HCT116 (cell line): ENCODE measurements at regions of chr1 and their contacts with region 1.

Region 1: DNA sequence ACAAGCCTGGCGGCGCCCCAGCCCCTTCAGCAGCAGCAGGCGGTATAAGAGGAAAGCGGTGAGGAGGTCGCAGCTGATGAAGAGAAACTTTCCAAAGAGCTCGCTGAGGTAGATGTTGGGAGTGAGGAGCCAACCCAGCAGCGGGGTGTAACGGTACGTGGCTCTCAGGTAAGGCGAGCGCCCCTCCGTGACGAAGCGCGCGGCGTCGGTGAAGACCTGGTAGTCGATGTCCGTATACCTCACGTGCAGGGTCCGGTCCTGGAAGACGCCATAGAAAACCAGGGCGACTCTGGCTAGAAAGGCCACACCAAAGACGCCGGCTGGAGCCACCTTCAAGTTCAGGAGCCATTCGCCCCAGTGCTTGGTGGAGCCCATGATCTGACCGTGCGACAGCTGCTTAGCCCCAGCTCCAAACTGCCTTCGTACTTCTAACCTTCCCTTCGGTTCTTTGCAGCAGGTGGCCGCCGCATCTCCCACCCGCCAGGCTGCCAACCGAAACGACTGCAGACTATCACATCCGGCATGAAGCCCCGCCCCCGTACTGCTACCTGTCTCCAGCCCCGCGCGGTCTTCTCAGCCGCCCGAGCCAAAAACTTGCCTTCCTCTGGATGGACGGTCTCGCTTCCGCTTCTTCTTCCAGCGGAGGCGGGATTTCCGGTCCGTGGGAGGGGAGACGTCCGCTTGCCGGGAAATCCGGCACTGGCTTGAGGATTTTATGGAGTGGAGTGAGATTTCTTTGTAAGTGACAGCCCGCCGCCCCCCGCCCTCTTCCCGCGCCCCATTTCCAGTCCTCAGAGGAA is at the start of gene PIGM:
- DNase-seq: peak; percentile 93
- ATAC-seq: peak; percentile 98
- H3K4me3 ChIP-seq: peak within 1 kb of the TSS; percentile 81 to 87
- H3K27ac ChIP-seq: peak within 1 kb of the TSS; percentile 62
- H3K4me1 ChIP-seq: peaks cover 5 to 18% of the 10 kb centered on the region in 2 experiments; a peak in 3 of 4 replicates
- H3K27me3 ChIP-seq: no peaks in the 10 kb centered on the region
- CTCF ChIP-seq: no peak
- POLR2A ChIP-seq: peak; percentile 51
- RAD21 ChIP-seq: no peak
- total RNA-seq, gene PIGM: 4.1 TPM

Region 2: DNA sequence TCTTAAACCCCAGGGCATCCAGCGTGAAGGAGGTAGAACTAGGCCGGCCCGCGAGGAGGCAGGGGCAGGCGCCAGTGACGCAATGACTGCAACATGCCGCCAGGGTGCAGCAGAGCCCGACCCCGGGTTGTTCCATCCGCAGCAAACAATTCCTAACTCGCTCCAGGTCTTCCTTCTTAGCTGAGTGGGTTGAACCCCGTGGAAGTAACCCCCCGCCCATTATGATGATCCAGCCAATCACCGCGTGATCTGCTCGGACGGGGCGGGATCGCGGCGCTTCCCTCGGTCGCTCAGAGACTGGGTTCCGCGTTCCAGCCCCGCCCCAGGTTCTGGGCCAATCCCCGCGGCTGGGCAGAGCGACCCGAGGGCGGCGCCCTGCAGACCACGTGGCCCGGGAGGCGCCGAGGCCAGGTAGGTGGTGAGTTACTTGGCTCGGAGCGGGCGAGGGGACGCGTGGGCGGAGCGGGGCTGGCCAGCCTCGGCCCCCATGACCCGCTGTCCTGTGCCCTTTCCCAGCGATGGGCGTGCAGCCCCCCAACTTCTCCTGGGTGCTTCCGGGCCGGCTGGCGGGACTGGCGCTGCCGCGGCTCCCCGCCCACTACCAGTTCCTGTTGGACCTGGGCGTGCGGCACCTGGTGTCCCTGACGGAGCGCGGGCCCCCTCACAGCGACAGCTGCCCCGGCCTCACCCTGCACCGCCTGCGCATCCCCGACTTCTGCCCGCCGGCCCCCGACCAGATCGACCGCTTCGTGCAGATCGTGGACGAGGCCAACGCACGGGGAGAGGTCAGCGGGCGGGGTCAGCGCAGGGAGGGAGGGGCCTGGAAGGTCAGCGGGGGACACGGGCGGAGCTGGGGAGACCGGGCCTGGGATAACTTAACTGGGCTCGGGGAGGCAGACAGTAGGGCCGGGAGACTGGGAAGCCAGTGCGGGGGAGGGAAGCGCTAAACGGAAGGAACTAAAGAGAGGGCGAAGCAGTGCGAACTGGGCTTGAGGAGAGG is 250.7 kb before region 1 on chr1 and contains the start of gene DUSP23:
- CTCF ChIA-PET with region 1: no interaction called
- POLR2A ChIA-PET with region 1: no interaction called
- RAD21 ChIA-PET with region 1: no interaction called
- intact Hi-C with region 1: loop called (anchors 1 kb)
- DNase-seq: peak; percentile 96
- ATAC-seq: peak; percentile 97
- H3K4me3 ChIP-seq: peak within 1 kb of the TSS; percentile 55 to 60
- H3K27ac ChIP-seq: peak within 1 kb of the TSS; percentile 65
- H3K4me1 ChIP-seq: peaks cover 3 to 21% of the 10 kb centered on the region in 2 experiments; a peak in 2 of 4 replicates
- H3K27me3 ChIP-seq: no peaks in the 10 kb centered on the region
- CTCF ChIP-seq: peak; percentile 89 to 97 (median 90)
- POLR2A ChIP-seq: no peak
- RAD21 ChIP-seq: peak; percentile 93
- total RNA-seq, gene DUSP23: 35.8 TPM

Region 3: GRCh38 chr1:160046494-160047110 is 15.0 kb after region 1 on chr1:
- CTCF ChIA-PET with region 1: interaction called, 17 read pairs
- POLR2A ChIA-PET with region 1: no interaction called
- RAD21 ChIA-PET with region 1: no interaction called
- intact Hi-C with region 1: no loop called
- DNase-seq: no peak
- ATAC-seq: peak; percentile 90
- H3K4me3 ChIP-seq: no peak overlapping the region
- H3K27ac ChIP-seq: no peak overlapping the region
- H3K4me1 ChIP-seq: peaks cover 4 to 6% of the 10 kb centered on the region in 2 experiments; a peak in 3 of 4 replicates
- H3K27me3 ChIP-seq: peaks cover 13% of the 10 kb centered on the region
- CTCF ChIP-seq: peak; percentile 66 to 88 (median 81)
- POLR2A ChIP-seq: no peak
- RAD21 ChIP-seq: peak; percentile 76